OCI-LY7 (cell line): ENCODE measurements at regions of chr12 and their contacts with region 1.

Region 1: GRCh38 chr12:88141770-88142609 is at the starts of genes CEP290 and TMTC3:
- DNase-seq: peak; percentile 98
- H3K4me3 ChIP-seq: peak within 1 kb of the TSS; percentile 84
- H3K27ac ChIP-seq: peak within 1 kb of the TSS; percentile 36
- H3K4me1 ChIP-seq: peaks cover 33% of the 10 kb centered on the region
- CTCF ChIP-seq: no peak
- total RNA-seq, gene CEP290: 12.6 and 27.5 TPM in 2 replicates
- total RNA-seq, gene TMTC3: 5.5 and 6.6 TPM in 2 replicates

Region 2: GRCh38 chr12:88035271-88035906 is 106.6 kb before region 1 on chr12:
- CTCF ChIA-PET with region 1: no interaction called
- POLR2A ChIA-PET with region 1: interaction called, 4 read pairs
- intact Hi-C with region 1: loop called (anchors 2 kb)
- DNase-seq: peak; percentile 89
- H3K4me3 ChIP-seq: peak overlapping the region; percentile 78
- H3K27ac ChIP-seq: no peak overlapping the region
- H3K4me1 ChIP-seq: peaks cover 19% of the 10 kb centered on the region
- CTCF ChIP-seq: no peak

Region 3: GRCh38 chr12:88258396-88258795 is 116.4 kb after region 1 on chr12:
- CTCF ChIA-PET with region 1: no interaction called
- POLR2A ChIA-PET with region 1: no interaction called
- intact Hi-C with region 1: no loop called
- DNase-seq: no peak
- H3K4me3 ChIP-seq: no peak overlapping the region
- H3K27ac ChIP-seq: no peak overlapping the region
- H3K4me1 ChIP-seq: no peaks in the 10 kb centered on the region
- CTCF ChIP-seq: no peak